HEK293 (cell line): ENCODE measurements at regions of chr12 and their contacts with region 1.

Region 1: GRCh38 chr12:59113831-59114615 is 193.7 kb upstream of the LRIG3 start:
- H3K4me3 ChIP-seq: no peak overlapping the region
- H3K27ac ChIP-seq: no peak overlapping the region
- H3K4me1 ChIP-seq: no peaks in the 10 kb centered on the region
- CTCF ChIP-seq: peak; percentile 75

Region 2: DNA sequence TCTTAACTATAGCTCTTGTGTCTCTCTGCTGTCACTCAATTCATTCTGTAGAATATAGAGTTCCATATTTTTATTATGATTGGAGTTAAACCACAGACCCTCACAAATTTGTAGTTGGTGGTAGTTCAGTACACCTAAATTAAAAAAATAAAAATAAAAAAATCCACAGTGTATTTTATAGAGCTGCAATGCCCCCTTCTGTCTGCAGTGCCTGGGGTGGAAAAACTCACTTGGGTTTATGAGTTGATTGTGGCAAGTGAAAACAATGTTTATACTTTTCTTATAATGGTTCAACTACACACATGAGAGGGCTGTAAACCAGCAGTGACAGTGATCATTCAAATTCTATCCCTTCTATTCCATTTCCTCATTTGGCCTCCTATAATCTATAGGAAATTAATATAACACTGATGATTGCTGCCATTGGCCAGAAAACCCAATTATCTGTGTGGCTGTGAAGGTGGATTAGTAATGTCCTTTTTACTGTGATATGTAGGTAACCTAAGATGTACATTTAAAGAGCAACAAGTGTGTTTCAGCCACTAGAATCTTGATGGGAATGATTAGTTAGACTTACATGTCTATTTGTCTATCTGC is 26.8 kb before region 1 on chr12:
- CTCF ChIA-PET with region 1: interaction called, 12 read pairs
- POLR2A ChIA-PET with region 1: no interaction called
- H3K4me3 ChIP-seq: no peak overlapping the region
- H3K27ac ChIP-seq: no peak overlapping the region
- H3K4me1 ChIP-seq: peaks cover 22% of the 10 kb centered on the region
- CTCF ChIP-seq: peak; percentile 45; the same call in 1 of the 2 replicates

Region 3: DNA sequence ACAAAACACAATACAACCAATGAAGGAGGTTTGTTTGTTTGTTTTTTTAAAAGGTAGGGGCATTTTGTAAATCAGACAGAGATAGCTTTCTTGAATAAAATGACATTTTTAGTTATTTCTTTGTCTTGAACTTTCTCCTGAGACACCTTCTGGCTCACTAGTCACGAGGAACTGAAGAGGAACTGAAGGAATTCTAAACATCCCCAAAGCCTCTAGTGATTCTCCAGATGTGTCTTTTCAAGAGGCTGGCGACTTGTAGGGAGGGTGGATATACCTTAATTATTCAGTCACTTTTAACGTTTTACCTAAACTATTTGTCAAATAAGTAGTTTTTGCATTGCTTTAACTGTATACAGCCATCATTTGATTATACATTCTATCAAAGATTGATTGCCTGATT is 17.4 kb after region 1 on chr12:
- CTCF ChIA-PET with region 1: interaction called, 11 read pairs
- POLR2A ChIA-PET with region 1: no interaction called
- H3K4me3 ChIP-seq: no peak overlapping the region
- H3K27ac ChIP-seq: no peak overlapping the region
- H3K4me1 ChIP-seq: no peaks in the 10 kb centered on the region
- CTCF ChIP-seq: no peak

Region 4: DNA sequence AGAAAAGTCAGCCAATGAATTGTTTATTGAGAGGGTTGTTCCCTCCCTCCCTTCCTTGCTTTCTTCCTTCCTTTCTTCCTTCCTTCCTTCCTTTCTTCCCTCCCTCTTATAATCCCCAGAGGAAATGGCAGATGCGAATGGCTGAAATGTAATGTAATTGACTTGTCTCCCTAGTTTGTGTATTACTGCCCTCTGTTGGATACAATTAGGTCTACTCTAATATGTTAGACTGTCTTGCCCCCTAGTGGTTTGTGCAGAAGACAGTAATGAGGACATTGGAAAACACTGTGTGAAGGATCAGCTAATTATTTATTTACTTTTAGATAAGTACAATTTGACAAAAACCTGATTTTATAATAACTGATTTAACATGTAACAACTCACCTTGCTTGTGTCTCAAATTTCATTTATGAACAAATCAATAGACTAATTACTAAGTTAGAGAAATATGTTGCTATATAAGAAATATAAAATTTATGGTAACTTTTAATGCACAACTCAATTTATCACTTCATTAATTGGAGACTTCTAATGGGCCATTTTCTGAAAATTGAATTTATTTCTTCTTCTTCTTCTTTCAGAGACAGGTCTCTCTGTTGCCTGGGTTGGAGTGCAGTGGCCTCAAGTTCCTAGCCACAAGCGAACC is 36.1 kb after region 1 on chr12:
- CTCF ChIA-PET with region 1: interaction called, 68 read pairs
- POLR2A ChIA-PET with region 1: no interaction called
- H3K4me3 ChIP-seq: no peak overlapping the region
- H3K27ac ChIP-seq: no peak overlapping the region
- H3K4me1 ChIP-seq: no peaks in the 10 kb centered on the region
- CTCF ChIP-seq: peak; percentile 90